MCF 10A (cell line): ENCODE measurements at regions of chr10 and their contacts with region 1.

Region 1: GRCh38 chr10:15370856-15371701 is at the start of gene FAM171A1:
- DNase-seq: peak; percentile 60
- H3K4me3 Mint-ChIP-seq: peak within 1 kb of the TSS; percentile 74
- H3K27ac Mint-ChIP-seq: peak within 1 kb of the TSS; percentile 49
- H3K4me1 Mint-ChIP-seq: no peaks in the 10 kb centered on the region
- H3K27me3 Mint-ChIP-seq: no peaks in the 10 kb centered on the region
- CTCF ChIP-seq: peak; percentile 27
- total RNA-seq, gene FAM171A1: 9.3 and 15.9 TPM in 2 replicates

Region 2: DNA sequence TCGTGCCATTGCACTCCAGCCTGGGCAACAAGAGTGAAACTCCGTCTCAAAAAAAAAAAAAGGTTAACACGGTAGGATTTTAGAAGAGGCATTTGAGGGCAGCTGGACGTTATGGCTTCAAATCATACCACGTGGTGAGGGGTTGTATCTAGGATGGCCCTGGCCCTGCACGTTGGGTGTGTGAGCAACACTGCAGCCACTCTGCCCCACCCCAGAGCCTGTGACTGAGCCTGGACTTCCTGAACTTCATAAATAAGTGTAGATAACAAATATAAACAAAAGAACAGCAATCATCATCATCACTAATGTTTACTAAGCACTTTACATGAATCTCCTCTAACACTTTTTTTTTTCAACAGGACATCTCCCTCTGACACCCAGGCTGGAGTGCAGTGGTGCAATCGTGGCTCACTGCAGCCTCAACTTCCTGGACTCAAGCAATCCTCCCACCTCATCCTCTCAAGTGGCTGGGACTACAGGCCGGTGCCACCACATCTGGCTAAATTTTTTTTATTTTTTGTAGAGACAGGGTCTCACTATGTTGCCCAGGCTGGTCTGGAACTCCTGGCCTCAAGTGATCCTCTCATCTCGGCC is 870.8 kb before region 1 on chr10:
- CTCF ChIA-PET with region 1: no interaction called
- POLR2A ChIA-PET with region 1: no interaction called
- intact Hi-C with region 1: loop called (anchors 5 kb)
- DNase-seq: no peak
- H3K4me3 Mint-ChIP-seq: no peak overlapping the region
- H3K27ac Mint-ChIP-seq: no peak overlapping the region
- H3K4me1 Mint-ChIP-seq: no peaks in the 10 kb centered on the region
- H3K27me3 Mint-ChIP-seq: peaks cover 11% of the 10 kb centered on the region
- CTCF ChIP-seq: no peak

Region 3: GRCh38 chr10:15084502-15084922 is 286.6 kb before region 1 on chr10:
- CTCF ChIA-PET with region 1: no interaction called
- POLR2A ChIA-PET with region 1: no interaction called
- intact Hi-C with region 1: loop called (anchors 1 kb)
- DNase-seq: peak; percentile 97
- H3K4me3 Mint-ChIP-seq: peak overlapping the region; percentile 92
- H3K27ac Mint-ChIP-seq: no peak overlapping the region
- H3K4me1 Mint-ChIP-seq: peaks cover 7% of the 10 kb centered on the region
- H3K27me3 Mint-ChIP-seq: no peaks in the 10 kb centered on the region
- CTCF ChIP-seq: no peak

Region 4: DNA sequence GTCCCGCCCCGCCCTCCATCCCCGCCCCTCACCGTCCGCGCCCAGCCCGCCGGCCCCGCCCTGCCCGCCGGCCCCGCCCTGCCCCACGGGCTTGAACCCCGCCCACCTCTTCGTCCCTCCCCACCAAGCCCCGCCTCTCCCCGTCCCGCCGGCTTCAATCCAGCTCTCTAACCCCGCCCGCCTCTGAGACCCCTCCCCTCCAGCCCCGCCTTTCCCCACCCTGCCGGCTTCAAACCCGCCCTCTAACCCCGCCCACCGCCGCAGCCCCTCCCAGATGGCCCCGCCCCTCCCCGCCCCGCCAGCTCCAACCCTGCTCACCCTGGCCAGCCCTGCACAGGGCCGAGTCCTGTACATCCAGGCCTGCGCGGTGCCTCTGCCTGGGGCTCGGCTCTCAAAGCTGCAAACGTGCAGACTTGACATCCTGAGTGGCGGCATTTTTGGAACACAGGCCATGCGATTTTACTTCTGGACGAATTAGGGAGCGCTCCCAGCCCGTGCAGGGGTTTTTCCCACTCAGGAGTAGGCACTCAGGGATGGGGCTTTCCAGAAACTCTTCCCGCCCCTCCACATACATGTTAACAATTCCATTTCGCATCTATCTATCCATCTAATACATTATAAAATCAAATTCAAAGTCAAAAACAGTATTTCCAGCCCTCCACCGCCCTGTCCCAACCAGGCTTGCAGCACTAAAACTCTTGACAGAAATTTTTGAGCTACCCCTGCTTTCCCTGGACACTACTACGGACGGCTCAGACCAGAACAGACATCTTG is 202.1 kb before region 1 on chr10:
- CTCF ChIA-PET with region 1: interaction called, 3 read pairs
- POLR2A ChIA-PET with region 1: interaction called, 5 read pairs
- intact Hi-C with region 1: loop called (anchors 5 kb)
- DNase-seq: peak; percentile 92
- H3K4me3 Mint-ChIP-seq: peak overlapping the region; percentile 87
- H3K27ac Mint-ChIP-seq: peak overlapping the region; percentile 80
- H3K4me1 Mint-ChIP-seq: peaks cover 23% of the 10 kb centered on the region
- H3K27me3 Mint-ChIP-seq: no peaks in the 10 kb centered on the region
- CTCF ChIP-seq: no peak

Region 5: GRCh38 chr10:15262036-15262713 is 108.9 kb before region 1 on chr10:
- CTCF ChIA-PET with region 1: no interaction called
- POLR2A ChIA-PET with region 1: no interaction called
- intact Hi-C with region 1: loop called (anchors 5 kb)
- DNase-seq: peak; percentile 19
- H3K4me3 Mint-ChIP-seq: no peak overlapping the region
- H3K27ac Mint-ChIP-seq: no peak overlapping the region
- H3K4me1 Mint-ChIP-seq: no peaks in the 10 kb centered on the region
- H3K27me3 Mint-ChIP-seq: no peaks in the 10 kb centered on the region
- CTCF ChIP-seq: peak; percentile 18